B cell (primary cell): ENCODE measurements at regions of chr9 and their contacts with region 1.

Region 1: GRCh38 chr9:114291064-114291474 is 31.8 kb upstream of the ORM1 start:
- DNase-seq: peak; percentile 70
- ATAC-seq: no peak
- H3K4me3 ChIP-seq: no peak overlapping the region
- H3K4me3 Mint-ChIP-seq: no peak overlapping the region
- H3K27ac ChIP-seq: no peak overlapping the region
- H3K27ac Mint-ChIP-seq: no peak overlapping the region
- H3K4me1 ChIP-seq: peaks cover 0 to 3% of the 10 kb centered on the region in 2 donors
- H3K4me1 Mint-ChIP-seq: no peaks in the 10 kb centered on the region
- H3K27me3 ChIP-seq: peaks cover 0 to 6% (median 2%) of the 10 kb centered on the region in 4 experiments
- H3K27me3 Mint-ChIP-seq: peaks cover 5% of the 10 kb centered on the region
- CTCF ChIP-seq: peak; percentile 94

Region 2: DNA sequence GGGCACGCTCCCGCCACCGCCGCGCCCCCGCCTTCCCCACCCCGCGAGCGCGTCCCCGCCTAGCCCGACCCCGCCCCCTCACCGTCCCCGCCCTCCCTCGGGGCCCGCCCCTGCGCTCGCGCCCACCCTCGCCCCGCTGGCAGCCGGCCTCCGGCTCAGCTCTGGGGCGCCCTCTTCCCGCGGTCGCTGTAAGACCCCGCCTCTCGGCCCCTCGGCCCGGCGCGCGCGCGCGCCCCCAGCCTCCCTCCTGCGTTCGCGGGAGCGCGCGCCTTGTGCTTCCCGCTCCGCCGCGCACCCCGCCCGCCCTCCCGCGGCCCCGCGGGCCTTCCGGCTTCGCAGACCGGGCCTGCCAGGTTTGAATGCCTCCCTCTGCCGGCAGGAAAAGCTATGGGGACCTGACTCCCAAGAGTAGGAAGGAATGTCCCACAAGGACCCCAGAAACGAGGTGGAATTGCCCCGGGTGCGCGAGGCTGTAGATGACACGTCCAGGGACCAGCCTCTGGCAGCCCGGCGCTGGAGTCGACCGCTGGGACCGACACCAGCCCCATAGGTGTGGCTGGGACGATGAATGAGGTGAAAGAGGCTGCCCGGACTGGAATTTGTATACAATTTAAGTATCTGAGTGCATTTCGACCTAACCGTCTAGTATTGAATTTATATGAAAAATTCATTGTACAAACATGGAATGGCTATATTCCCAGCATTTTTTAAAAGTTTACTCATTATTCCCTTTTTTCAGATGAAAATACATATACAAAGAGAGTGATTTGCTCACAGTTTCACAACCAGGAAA is 1957.2 kb before region 1 on chr9:
- CTCF ChIA-PET with region 1: no interaction called
- POLR2A ChIA-PET with region 1: no interaction called
- intact Hi-C with region 1: no loop called
- DNase-seq: peak; percentile 97
- ATAC-seq: peak; percentile 86
- H3K4me3 ChIP-seq: peak overlapping the region; percentile 71 to 93 (median 90)
- H3K4me3 Mint-ChIP-seq: peak overlapping the region; percentile 98
- H3K27ac ChIP-seq: peak overlapping the region; percentile 89 to 97
- H3K27ac Mint-ChIP-seq: peak overlapping the region; percentile 99
- H3K4me1 ChIP-seq: peaks cover 16 to 25% of the 10 kb centered on the region in 2 donors
- H3K4me1 Mint-ChIP-seq: peaks cover 35% of the 10 kb centered on the region
- H3K27me3 ChIP-seq: no peaks in the 10 kb centered on the region
- H3K27me3 Mint-ChIP-seq: no peaks in the 10 kb centered on the region
- CTCF ChIP-seq: peak; percentile 66

Region 3: GRCh38 chr9:114082017-114082762 is 208.9 kb before region 1 on chr9:
- CTCF ChIA-PET with region 1: interaction called, 16 read pairs
- POLR2A ChIA-PET with region 1: no interaction called
- intact Hi-C with region 1: no loop called
- DNase-seq: peak; percentile 78
- ATAC-seq: peak; percentile 43
- H3K4me3 ChIP-seq: no peak overlapping the region
- H3K4me3 Mint-ChIP-seq: no peak overlapping the region
- H3K27ac ChIP-seq: no peak overlapping the region
- H3K27ac Mint-ChIP-seq: no peak overlapping the region
- H3K4me1 ChIP-seq: no peaks in the 10 kb centered on the region
- H3K4me1 Mint-ChIP-seq: no peaks in the 10 kb centered on the region
- H3K27me3 ChIP-seq: no peaks in the 10 kb centered on the region
- H3K27me3 Mint-ChIP-seq: peaks cover 17% of the 10 kb centered on the region
- CTCF ChIP-seq: peak; percentile 87

Region 4: DNA sequence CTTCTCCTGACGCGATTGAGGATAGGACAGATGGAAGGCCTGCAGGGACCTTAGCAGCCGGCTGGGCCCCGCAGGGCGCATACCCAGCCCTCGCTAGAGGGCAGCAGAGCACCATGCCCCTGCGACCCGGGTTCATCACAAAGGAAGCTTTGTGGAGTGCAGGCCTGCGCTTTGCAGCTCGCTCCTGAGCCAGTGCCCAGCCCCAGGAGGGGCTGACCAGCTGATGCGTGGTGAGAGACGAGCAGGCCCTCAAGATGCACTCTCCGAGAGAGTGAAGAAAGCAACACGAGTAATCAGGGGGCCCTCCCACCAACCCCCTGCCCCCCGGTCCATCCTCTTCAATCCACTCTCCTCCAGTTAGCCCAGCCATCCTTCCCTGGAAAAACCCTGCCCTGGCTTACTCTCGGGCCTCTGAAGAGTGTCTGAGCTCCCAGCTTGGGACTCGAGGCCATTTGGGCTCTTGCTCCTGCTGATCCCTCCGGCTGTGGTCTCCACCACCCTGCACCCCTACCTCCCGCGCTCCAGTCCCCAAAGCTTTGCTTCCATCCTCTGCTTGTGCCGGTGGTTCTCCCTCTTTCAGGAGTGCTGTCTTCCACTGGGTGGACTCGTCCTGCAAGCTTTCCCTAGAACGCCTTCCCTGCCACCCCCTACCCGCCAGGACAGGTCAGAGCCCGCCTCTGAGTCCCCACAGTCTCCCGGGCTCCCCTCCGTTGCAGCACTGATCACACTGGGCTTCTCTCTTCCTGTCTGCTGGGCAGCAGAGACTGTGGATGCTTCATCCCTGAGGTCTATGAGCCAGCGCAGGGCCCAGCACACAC is 182.8 kb before region 1 on chr9:
- CTCF ChIA-PET with region 1: interaction called, 16 read pairs
- POLR2A ChIA-PET with region 1: no interaction called
- intact Hi-C with region 1: no loop called
- DNase-seq: peak; percentile 49
- ATAC-seq: peak; percentile 31
- H3K4me3 ChIP-seq: no peak overlapping the region
- H3K4me3 Mint-ChIP-seq: no peak overlapping the region
- H3K27ac ChIP-seq: no peak overlapping the region
- H3K27ac Mint-ChIP-seq: no peak overlapping the region
- H3K4me1 ChIP-seq: no peaks in the 10 kb centered on the region
- H3K4me1 Mint-ChIP-seq: no peaks in the 10 kb centered on the region
- H3K27me3 ChIP-seq: peaks cover 0 to 3% (median 0%) of the 10 kb centered on the region in 4 experiments
- H3K27me3 Mint-ChIP-seq: peaks cover 28% of the 10 kb centered on the region
- CTCF ChIP-seq: peak; percentile 60

Region 5: DNA sequence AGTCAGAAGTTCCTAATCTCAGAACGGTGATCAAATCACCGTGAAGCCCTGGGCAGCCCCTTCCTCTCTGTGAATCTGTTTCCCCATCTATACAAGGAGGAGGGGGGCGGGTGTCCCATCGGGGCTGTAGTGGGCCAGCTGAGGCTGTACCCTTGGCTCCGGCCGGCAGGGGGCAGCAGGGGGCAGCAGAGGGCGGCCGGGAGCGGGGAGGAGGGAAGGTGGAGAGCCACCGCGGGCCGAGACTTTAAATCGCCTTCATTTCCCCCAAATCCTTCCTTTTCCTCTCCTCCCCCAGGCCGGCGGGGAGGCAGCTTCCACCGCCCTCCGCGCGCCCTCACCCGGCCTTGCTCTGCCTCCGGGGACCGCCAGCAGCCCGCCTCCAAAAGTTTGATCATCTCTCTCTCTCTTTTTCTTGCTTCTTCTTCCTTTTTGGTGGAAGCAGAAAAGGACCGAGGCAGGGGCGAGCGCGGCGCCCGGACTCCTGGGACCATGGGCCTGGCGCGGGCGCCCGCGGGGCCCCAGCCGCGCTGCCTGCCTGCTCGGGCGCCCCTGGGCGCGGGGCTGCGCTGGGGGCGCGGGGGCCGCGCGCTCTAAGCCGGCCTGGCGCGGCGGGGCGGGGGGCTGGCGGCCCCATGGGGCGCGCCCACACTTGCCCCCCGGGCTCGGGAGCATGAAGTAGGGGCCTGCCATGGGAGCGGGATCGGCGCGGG is 135.7 kb before region 1 on chr9 and contains the start of gene COL27A1:
- CTCF ChIA-PET with region 1: interaction called, 9 read pairs
- POLR2A ChIA-PET with region 1: no interaction called
- intact Hi-C with region 1: loop called (anchors 1 kb)
- DNase-seq: peak; percentile 79
- ATAC-seq: peak; percentile 96
- H3K4me3 ChIP-seq: peak within 1 kb of the TSS in 4 of 5 experiments; percentile 33 to 60 (median 53)
- H3K4me3 Mint-ChIP-seq: peak within 1 kb of the TSS; percentile 87
- H3K27ac ChIP-seq: no peak within 1 kb of the TSS
- H3K27ac Mint-ChIP-seq: no peak within 1 kb of the TSS
- H3K4me1 ChIP-seq: peaks cover 21% of the 10 kb centered on the region in 2 donors
- H3K4me1 Mint-ChIP-seq: peaks cover 21% of the 10 kb centered on the region
- H3K27me3 ChIP-seq: peaks cover 0 to 49% (median 23%) of the 10 kb centered on the region in 4 experiments
- H3K27me3 Mint-ChIP-seq: peaks cover 65% of the 10 kb centered on the region
- CTCF ChIP-seq: peak; percentile 87
- total RNA-seq, gene COL27A1: 0.27 TPM in 2 replicates

Region 6: DNA sequence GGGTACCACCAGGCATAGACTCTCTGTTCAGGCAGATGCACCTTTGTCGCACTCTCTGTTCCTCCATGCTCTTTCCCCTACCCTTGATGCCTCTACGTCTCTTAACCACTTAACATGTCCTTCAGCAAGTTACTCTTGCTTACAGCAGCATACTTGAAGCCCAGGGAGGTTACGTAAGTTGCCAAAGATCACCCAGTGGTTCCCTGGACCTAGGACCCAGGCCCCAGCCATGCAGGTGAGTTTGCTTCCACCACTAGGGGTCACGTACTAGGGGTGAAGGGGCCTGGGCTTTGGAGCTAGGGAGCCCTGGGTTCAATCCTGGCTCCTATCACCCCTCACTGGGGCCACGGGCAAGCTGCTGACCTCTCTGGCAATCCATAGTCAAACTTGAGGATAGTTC is 87.8 kb after region 1 on chr9:
- CTCF ChIA-PET with region 1: no interaction called
- POLR2A ChIA-PET with region 1: no interaction called
- intact Hi-C with region 1: no loop called
- DNase-seq: no peak
- ATAC-seq: no peak
- H3K4me3 ChIP-seq: no peak overlapping the region
- H3K4me3 Mint-ChIP-seq: peak overlapping the region; percentile 26
- H3K27ac ChIP-seq: peak overlapping the region; percentile 25 to 52
- H3K27ac Mint-ChIP-seq: peak overlapping the region; percentile 80
- H3K4me1 ChIP-seq: peaks cover 75 to 87% of the 10 kb centered on the region in 2 donors
- H3K4me1 Mint-ChIP-seq: peaks cover 81% of the 10 kb centered on the region
- H3K27me3 ChIP-seq: no peaks in the 10 kb centered on the region
- H3K27me3 Mint-ChIP-seq: no peaks in the 10 kb centered on the region
- CTCF ChIP-seq: no peak